BJ (cell line): ENCODE measurements at regions of chr3 and their contacts with region 1.

Region 1: GRCh38 chr3:112642912-112643506 is 2.1 kb upstream of the CCDC80 start:
- DNase-seq: no peak
- H3K4me3 ChIP-seq: no peak overlapping the region
- H3K27me3 ChIP-seq: no peaks in the 10 kb centered on the region
- CTCF ChIP-seq: peak; percentile 90

Region 2: DNA sequence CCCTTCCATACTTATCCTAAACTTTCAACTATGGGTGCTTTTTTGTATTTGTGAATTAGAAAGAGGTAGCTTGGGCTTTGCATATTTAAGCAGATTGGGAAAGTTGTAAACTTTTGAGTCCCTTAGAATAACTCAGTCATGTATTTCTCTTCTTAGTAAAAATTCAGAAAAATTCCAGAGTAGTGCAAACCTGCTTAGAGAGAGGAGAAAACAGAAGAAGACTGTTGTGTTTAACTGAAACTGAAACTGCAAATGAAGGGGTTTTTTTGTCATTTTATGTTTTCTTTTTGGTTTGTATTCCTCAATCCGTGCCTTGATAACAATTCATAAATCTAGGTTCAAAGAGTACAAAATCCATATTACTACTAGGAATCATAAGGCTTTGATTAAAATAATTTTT is 278.7 kb before region 1 on chr3:
- CTCF ChIA-PET with region 1: no interaction called
- POLR2A ChIA-PET with region 1: no interaction called
- DNase-seq: no peak
- H3K4me3 ChIP-seq: no peak overlapping the region
- H3K27me3 ChIP-seq: peaks cover 1% of the 10 kb centered on the region; the same call in 1 of the 2 replicates
- CTCF ChIP-seq: no peak

Region 3: GRCh38 chr3:112653209-112653871 is 10.3 kb after region 1 on chr3:
- CTCF ChIA-PET with region 1: interaction called, 36 read pairs
- POLR2A ChIA-PET with region 1: interaction called, 6 read pairs
- DNase-seq: peak; percentile 94
- H3K4me3 ChIP-seq: no peak overlapping the region
- H3K27me3 ChIP-seq: no peaks in the 10 kb centered on the region
- CTCF ChIP-seq: no peak

Region 4: GRCh38 chr3:112699436-112699978 is 56.5 kb after region 1 on chr3:
- CTCF ChIA-PET with region 1: interaction called, 16 read pairs
- POLR2A ChIA-PET with region 1: interaction called, 4 read pairs
- DNase-seq: peak; percentile 35
- H3K4me3 ChIP-seq: no peak overlapping the region
- H3K27me3 ChIP-seq: no peaks in the 10 kb centered on the region
- CTCF ChIP-seq: no peak

Region 5: DNA sequence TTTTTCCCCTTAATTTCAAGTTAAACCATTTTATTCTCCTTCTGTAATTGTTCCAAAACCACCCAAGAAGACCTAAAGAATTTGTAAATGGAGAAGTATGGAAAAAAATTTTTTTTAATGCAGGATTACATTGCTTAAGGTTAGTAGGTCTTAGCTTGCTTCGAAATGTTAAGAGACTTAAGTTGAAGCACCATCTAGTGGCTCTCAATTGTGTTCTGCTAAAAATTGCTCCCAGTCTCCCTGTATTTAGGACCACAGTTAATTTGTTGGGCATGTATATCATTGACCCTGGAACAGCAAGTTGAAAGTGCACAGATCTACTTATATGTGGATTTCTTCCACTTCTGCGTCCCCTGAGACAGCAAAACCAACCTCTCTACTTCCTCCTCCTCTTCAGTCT is 171.3 kb after region 1 on chr3:
- CTCF ChIA-PET with region 1: interaction called, 155 read pairs
- POLR2A ChIA-PET with region 1: interaction called, 22 read pairs
- DNase-seq: peak; percentile 28
- H3K4me3 ChIP-seq: no peak overlapping the region
- H3K27me3 ChIP-seq: no peaks in the 10 kb centered on the region
- CTCF ChIP-seq: peak; percentile 66